MCF 10A (cell line): ENCODE measurements at regions of chr5 and their contacts with region 1.

Region 1: DNA sequence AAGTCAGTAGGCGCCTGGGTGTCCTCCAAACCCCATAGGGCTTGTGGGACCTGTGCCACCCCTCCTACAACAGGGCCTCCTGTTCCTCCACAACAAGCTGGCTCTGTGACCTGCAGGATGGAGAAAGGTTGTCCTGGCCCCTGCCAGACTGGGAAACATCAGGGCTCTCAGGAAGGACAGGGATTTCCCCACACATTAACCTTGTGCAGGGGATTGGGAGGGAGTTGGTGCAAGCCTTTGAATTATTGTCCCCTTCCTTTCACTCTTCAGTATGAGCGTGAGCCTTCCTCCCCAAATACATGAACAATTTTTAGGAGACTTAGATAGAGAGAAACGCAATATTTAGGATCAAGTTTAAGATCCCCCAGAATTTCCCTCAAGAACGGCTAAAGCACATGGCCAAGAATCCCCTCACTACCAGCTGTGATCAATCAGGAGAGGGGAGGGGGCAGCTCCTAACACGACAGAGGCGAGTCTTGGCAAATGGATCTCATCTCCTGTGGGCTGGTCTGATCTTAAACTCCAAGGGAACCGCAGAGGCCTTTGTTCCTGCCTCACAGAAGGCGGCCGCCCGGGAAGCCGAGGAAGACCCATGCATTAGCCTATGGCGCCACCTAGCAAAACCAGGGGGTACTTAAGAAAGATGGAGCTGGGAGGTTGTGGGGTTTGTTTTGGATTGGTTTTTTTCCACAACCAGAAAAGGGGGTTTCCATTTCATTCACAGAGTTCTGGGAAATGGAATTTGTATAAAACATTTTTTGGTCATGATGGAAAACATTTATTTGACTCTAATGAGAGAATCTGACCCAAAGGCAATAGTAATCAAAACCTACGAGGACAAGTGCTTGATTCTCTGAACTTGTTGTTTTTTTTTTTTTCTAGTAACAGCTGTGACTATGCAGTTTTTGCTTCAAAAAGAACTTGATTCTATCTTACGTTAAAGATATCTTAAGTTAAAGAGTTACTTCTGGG is 36.1 kb upstream of the OSMR start:
- DNase-seq: peak; percentile 88
- H3K4me3 Mint-ChIP-seq: no peak overlapping the region
- H3K27ac Mint-ChIP-seq: no peak overlapping the region
- H3K4me1 Mint-ChIP-seq: peaks cover 31% of the 10 kb centered on the region
- H3K27me3 Mint-ChIP-seq: no peaks in the 10 kb centered on the region
- CTCF ChIP-seq: peak; percentile 84

Region 2: DNA sequence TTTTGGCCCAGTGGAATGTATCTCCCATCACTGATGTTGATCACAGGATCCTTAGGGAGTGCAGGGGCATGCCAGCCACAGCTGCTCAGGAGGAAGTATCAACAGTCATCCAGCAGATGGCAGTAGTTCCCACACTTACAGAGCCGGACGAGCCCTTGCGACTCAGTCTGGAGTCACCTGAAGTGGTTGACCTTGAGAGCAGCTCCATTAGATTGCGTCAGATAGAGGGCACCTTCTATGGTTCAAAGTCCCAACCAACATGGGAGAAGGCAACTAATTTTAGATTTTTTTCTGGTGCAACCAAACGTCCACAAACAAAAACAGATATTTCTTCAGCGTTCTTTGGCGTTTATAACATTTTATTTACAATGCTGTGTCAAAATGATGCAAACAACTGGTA is 426.8 kb before region 1 on chr5:
- CTCF ChIA-PET with region 1: interaction called, 26 read pairs
- POLR2A ChIA-PET with region 1: no interaction called
- intact Hi-C with region 1: loop called (anchors 2 kb)
- DNase-seq: peak; percentile 85
- H3K4me3 Mint-ChIP-seq: no peak overlapping the region
- H3K27ac Mint-ChIP-seq: no peak overlapping the region
- H3K4me1 Mint-ChIP-seq: no peaks in the 10 kb centered on the region
- H3K27me3 Mint-ChIP-seq: peaks cover 17% of the 10 kb centered on the region
- CTCF ChIP-seq: peak; percentile 84

Region 3: GRCh38 chr5:38551030-38552017 is 258.4 kb before region 1 on chr5:
- CTCF ChIA-PET with region 1: interaction called, 13 read pairs
- POLR2A ChIA-PET with region 1: interaction called, 3 read pairs
- intact Hi-C with region 1: loop called (anchors 2 kb)
- DNase-seq: peak; percentile 72
- H3K4me3 Mint-ChIP-seq: no peak overlapping the region
- H3K27ac Mint-ChIP-seq: no peak overlapping the region
- H3K4me1 Mint-ChIP-seq: peaks cover 5% of the 10 kb centered on the region
- H3K27me3 Mint-ChIP-seq: no peaks in the 10 kb centered on the region
- CTCF ChIP-seq: peak; percentile 57

Region 4: GRCh38 chr5:38666668-38667498 is 142.8 kb before region 1 on chr5:
- CTCF ChIA-PET with region 1: interaction called, 5 read pairs
- POLR2A ChIA-PET with region 1: no interaction called
- intact Hi-C with region 1: loop called (anchors 1 kb)
- DNase-seq: peak; percentile 64
- H3K4me3 Mint-ChIP-seq: no peak overlapping the region
- H3K27ac Mint-ChIP-seq: peak overlapping the region; percentile 43
- H3K4me1 Mint-ChIP-seq: peaks cover 29% of the 10 kb centered on the region
- H3K27me3 Mint-ChIP-seq: no peaks in the 10 kb centered on the region
- CTCF ChIP-seq: peak; percentile 49

Region 5: GRCh38 chr5:38795986-38796741 is 13.5 kb before region 1 on chr5:
- CTCF ChIA-PET with region 1: interaction called, 21 read pairs
- POLR2A ChIA-PET with region 1: no interaction called
- intact Hi-C with region 1: no loop called
- DNase-seq: no peak
- H3K4me3 Mint-ChIP-seq: no peak overlapping the region
- H3K27ac Mint-ChIP-seq: no peak overlapping the region
- H3K4me1 Mint-ChIP-seq: no peaks in the 10 kb centered on the region
- H3K27me3 Mint-ChIP-seq: no peaks in the 10 kb centered on the region
- CTCF ChIP-seq: no peak

Region 6: GRCh38 chr5:38922199-38922598 is 112.5 kb after region 1 on chr5:
- CTCF ChIA-PET with region 1: interaction called, 19 read pairs
- POLR2A ChIA-PET with region 1: interaction called, 3 read pairs
- intact Hi-C with region 1: loop called (anchors 5 kb)
- DNase-seq: peak; percentile 65
- H3K4me3 Mint-ChIP-seq: no peak overlapping the region
- H3K27ac Mint-ChIP-seq: no peak overlapping the region
- H3K4me1 Mint-ChIP-seq: no peaks in the 10 kb centered on the region
- H3K27me3 Mint-ChIP-seq: no peaks in the 10 kb centered on the region
- CTCF ChIP-seq: peak; percentile 84

Region 7: GRCh38 chr5:39202597-39203274 is 393.1 kb after region 1 on chr5:
- CTCF ChIA-PET with region 1: no interaction called
- POLR2A ChIA-PET with region 1: no interaction called
- intact Hi-C with region 1: no loop called
- DNase-seq: no peak
- H3K4me3 Mint-ChIP-seq: no peak overlapping the region
- H3K27ac Mint-ChIP-seq: no peak overlapping the region
- H3K4me1 Mint-ChIP-seq: peaks cover 5% of the 10 kb centered on the region
- H3K27me3 Mint-ChIP-seq: no peaks in the 10 kb centered on the region
- CTCF ChIP-seq: no peak